ENCODE measurements at regions of chr1 and their contacts with region 1.

Region 1: DNA sequence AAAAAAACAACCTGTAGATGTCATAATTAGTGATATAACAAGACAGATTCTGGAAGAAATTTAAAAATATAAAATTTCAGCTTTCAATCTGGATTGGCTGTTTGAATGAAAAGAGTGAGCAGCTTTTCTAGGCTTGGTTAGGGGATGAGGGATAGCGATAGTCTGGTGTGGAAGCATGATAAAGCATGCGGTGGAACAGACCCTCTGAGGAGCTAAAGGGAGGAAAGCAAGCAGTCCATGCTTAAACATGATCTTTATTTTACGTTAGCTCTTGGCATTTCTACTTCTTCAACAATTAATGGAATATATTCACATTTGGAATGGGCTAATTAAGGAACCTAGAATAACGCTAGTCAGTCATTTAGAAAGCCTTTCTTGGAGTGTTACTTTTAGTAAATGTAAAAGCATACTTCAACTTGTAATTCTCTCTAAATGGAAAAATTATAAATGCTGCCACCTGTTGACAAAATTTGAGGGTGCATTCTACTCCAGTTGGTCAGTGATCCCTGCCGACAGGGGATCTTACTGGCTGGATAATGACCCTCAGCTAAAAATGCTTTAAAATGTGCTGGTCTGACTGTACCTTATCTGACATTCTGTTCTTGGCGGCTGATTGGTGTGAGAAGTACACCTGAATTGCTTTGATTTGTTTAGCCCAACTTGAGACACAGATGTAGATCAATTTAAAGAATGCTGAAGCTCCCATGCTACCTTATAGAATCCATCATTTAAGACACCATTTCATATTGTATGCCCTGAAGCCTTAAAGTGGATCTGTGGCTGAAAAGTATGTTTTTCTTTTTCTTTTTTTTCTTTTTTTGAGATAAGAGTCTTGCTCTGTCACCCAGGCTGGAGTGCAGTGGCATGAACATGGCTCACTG is 61.2 kb downstream of the AK4 start:
- DNase-seq: no peak
- H3K4me3 Mint-ChIP-seq: no peak overlapping the region
- H3K27ac Mint-ChIP-seq: no peak overlapping the region
- H3K4me1 Mint-ChIP-seq: peaks cover 58% of the 10 kb centered on the region
- H3K27me3 Mint-ChIP-seq: no peaks in the 10 kb centered on the region

Region 2: GRCh38 chr1:65002508-65003315 is 206.5 kb before region 1 on chr1:
- intact Hi-C with region 1: no loop called
- DNase-seq: peak; percentile 50
- H3K4me3 Mint-ChIP-seq: peak overlapping the region; percentile 67
- H3K27ac Mint-ChIP-seq: no peak overlapping the region
- H3K4me1 Mint-ChIP-seq: peaks cover 34% of the 10 kb centered on the region
- H3K27me3 Mint-ChIP-seq: peaks cover 32% of the 10 kb centered on the region

Region 3: GRCh38 chr1:65059930-65060538 is 149.2 kb before region 1 on chr1:
- intact Hi-C with region 1: loop called (anchors 2 kb)
- DNase-seq: no peak
- H3K4me3 Mint-ChIP-seq: no peak overlapping the region
- H3K27ac Mint-ChIP-seq: no peak overlapping the region
- H3K4me1 Mint-ChIP-seq: peaks cover 6% of the 10 kb centered on the region
- H3K27me3 Mint-ChIP-seq: no peaks in the 10 kb centered on the region

Region 4: GRCh38 chr1:65148548-65149350 is 60.5 kb before region 1 on chr1:
- intact Hi-C with region 1: loop called (anchors 2 kb)
- DNase-seq: peak; percentile 43
- H3K4me3 Mint-ChIP-seq: peak overlapping the region; percentile 90
- H3K27ac Mint-ChIP-seq: peak overlapping the region; percentile 88
- H3K4me1 Mint-ChIP-seq: peaks cover 40% of the 10 kb centered on the region
- H3K27me3 Mint-ChIP-seq: peaks cover 14% of the 10 kb centered on the region

Region 5: GRCh38 chr1:65182658-65183268 is 26.5 kb before region 1 on chr1:
- intact Hi-C with region 1: loop called (anchors 1 kb)
- DNase-seq: no peak
- H3K4me3 Mint-ChIP-seq: no peak overlapping the region
- H3K27ac Mint-ChIP-seq: no peak overlapping the region
- H3K4me1 Mint-ChIP-seq: peaks cover 16% of the 10 kb centered on the region
- H3K27me3 Mint-ChIP-seq: no peaks in the 10 kb centered on the region

Region 6: GRCh38 chr1:65195495-65196417 is 13.5 kb before region 1 on chr1:
- intact Hi-C with region 1: loop called (anchors 2 kb)
- DNase-seq: no peak
- H3K4me3 Mint-ChIP-seq: no peak overlapping the region
- H3K27ac Mint-ChIP-seq: peak overlapping the region; percentile 58
- H3K4me1 Mint-ChIP-seq: peaks cover 30% of the 10 kb centered on the region
- H3K27me3 Mint-ChIP-seq: no peaks in the 10 kb centered on the region

Region 7: DNA sequence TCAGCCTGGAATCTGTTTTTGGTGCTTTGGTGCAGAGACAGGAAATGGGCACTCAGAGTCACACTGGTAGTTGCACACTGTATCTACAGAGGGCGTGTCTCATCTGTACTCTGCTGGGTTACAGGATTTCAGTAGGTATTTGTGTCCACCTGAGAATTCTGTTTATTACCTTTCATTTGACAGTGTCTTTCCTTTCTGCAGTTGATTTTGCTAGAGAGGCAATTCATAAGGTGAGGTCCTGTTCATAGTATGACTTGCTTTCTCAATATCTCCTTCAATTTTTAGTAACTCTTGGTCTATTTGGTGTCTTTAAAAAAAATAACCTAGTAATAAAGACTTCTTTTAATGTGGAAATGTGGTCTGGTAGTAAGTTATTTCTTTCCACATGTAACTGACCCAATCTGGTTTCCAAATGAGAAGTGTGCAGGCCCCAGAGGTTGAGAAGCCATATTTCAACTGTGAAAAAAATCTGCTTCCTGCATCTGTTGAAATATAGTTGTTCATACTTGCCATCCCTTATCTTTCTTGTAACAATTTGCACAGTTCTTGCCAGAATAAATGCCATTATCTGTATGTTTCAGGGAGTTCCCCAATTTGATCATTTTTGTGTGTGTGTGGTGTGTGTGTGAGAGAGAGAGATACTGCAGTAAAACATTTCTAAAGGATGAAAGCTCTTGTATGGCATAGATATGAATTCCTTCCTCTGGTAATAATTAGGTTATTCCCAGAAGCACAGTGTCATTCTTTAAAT is 21.7 kb after region 1 on chr1:
- intact Hi-C with region 1: loop called (anchors 1 kb)
- DNase-seq: no peak
- H3K4me3 Mint-ChIP-seq: peak overlapping the region; percentile 26
- H3K27ac Mint-ChIP-seq: peak overlapping the region; percentile 79
- H3K4me1 Mint-ChIP-seq: peaks cover 34% of the 10 kb centered on the region
- H3K27me3 Mint-ChIP-seq: no peaks in the 10 kb centered on the region

Measured in activated T-helper 2 cell treated with anti-CD3 and anti-CD28 coated beads, Interferon-gamma antibody, Interleukin-2, Interleukin-4, amounts not matched to agents 10 μg/mL and 5 μg/mL and 100 μg/mL, durations not matched to agents 14 hours and 24 hours and 36 hours (primary cell).